Heart right ventricle (tissue), 16 donors: ENCODE measurements at regions of chr3 and their contacts with region 1.

Region 1: DNA sequence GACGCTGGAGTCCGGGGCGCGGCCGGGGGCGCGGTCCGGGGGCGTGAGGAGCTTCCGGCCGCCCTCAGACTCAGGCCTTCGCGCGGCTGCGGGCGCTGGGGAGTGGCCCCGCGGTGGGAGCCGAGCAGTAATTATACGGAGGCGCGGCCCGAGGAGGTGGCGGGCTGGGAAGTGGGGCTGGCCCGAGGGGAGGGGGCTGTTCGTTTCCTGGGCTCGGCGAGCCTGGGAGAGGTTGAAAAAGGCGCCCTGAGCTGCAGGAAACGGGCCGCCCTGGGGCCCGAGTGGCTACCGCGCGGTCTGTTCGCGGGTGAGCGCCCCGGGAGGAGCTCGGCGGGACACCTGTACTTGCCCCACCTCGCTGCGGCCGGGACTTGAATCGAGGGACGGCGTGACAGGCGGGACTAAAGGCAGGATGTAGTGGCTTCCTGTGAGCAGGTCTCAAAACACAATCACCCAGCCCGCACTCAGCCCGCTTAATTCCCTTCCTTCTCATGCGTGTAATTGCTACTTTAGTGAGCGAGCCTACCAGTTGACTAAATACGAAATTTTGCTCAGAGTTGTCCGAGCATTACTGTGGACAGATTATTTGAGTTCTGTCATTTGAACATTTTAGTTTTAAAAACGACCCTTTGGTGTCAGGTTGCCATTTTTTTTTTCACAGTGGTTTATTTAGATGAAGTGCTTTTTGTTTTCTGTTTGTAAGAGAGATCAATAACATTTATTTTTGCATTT is 860 bp downstream of the RASA2 start:
- DNase-seq: peak; percentile 54 to 68
- ATAC-seq: peak; percentile 56 to 81 (median 68)
- H3K4me3 ChIP-seq: peak overlapping the region; percentile 69 to 92 (median 86)
- H3K27ac ChIP-seq: peak overlapping the region; percentile 86 to 97 (median 95)
- H3K4me1 ChIP-seq: peaks cover 0 to 76% (median 19%) of the 10 kb centered on the region in 9 donors
- H3K27me3 ChIP-seq: no peaks in the 10 kb centered on the region
- CTCF ChIP-seq: no peak

Region 2: GRCh38 chr3:141544697-141545096 is 57.0 kb after region 1 on chr3:
- intact Hi-C with region 1: loop called in 1 of 10 experiments (anchors 5 kb)
- DNase-seq: no peak
- ATAC-seq: peak in 5 of 8 donors; percentile 49 to 74 (median 61)
- H3K4me3 ChIP-seq: peak overlapping the region in 2 of 10 donors; percentile 1 to 27
- H3K27ac ChIP-seq: peak overlapping the region in 3 of 10 donors; percentile 4 to 38 (median 35)
- H3K4me1 ChIP-seq: peaks cover 0 to 28% (median 0%) of the 10 kb centered on the region in 9 donors
- H3K27me3 ChIP-seq: no peaks in the 10 kb centered on the region
- CTCF ChIP-seq: no peak